ENCODE measurements at regions of chr22 and their contacts with region 1.

Region 1: DNA sequence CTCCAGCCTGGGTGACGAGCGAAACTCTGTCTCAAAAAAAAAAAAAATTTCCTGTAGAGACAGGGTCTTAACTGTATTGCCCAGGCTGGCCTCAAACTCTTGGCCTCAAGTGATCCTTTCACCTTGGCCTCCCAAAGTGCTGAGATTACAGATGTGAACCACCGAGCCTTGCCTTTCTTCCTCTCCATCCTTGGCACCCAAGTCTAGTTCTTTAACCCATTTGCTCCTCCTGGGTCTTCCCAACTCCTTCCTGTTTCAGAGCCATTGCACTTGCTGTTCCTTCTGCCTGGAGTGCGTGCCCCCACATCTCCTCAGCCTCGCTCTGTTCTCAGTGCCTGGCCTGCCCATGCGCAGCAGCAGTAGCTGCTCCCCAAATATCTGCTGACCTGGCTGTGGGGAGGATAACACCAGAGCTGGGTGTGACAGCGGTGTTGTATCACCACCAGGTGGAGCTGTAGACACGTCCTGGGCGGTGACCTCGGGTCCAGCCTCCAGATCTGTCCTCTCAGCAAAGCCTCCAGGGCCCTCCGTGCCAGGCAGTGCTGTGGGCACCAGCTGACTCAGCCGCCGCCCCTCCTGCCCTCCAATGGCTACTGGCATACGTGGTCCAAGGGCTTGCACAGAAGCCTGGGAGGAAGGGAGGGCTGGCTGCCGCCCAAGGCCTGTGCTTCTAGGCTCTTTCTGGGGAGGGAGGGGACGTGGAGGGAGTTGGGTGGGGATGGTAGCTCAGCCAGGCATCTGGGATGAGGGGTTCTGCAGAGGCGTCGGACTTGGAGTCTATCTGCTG is 22.0 kb downstream of the TEF start:
- DNase-seq: peak; percentile 86
- H3K4me3 ChIP-seq: no peak overlapping the region
- H3K27ac ChIP-seq: no peak overlapping the region
- H3K4me1 ChIP-seq: peaks cover 10% of the 10 kb centered on the region
- CTCF ChIP-seq: peak; percentile 98

Region 2: GRCh38 chr22:41360126-41360525 is 43.6 kb before region 1 on chr22:
- CTCF ChIA-PET with region 1: no interaction called
- POLR2A ChIA-PET with region 1: no interaction called
- intact Hi-C with region 1: no loop called
- DNase-seq: no peak
- H3K4me3 ChIP-seq: no peak overlapping the region
- H3K27ac ChIP-seq: no peak overlapping the region
- H3K4me1 ChIP-seq: no peaks in the 10 kb centered on the region
- CTCF ChIP-seq: no peak

Region 3: GRCh38 chr22:41381329-41382097 is 22.2 kb before region 1 on chr22 and contains the start of gene TEF:
- CTCF ChIA-PET with region 1: interaction called, 19 read pairs
- POLR2A ChIA-PET with region 1: no interaction called
- intact Hi-C with region 1: no loop called
- DNase-seq: peak; percentile 99
- H3K4me3 ChIP-seq: peak within 1 kb of the TSS; percentile 76
- H3K27ac ChIP-seq: peak within 1 kb of the TSS; percentile 59
- H3K4me1 ChIP-seq: peaks cover 24% of the 10 kb centered on the region
- CTCF ChIP-seq: no peak
- total RNA-seq, gene TEF: 4.3 and 6.8 TPM in 2 replicates

Region 4: GRCh38 chr22:41501209-41501608 is 97.5 kb after region 1 on chr22:
- CTCF ChIA-PET with region 1: no interaction called
- POLR2A ChIA-PET with region 1: no interaction called
- intact Hi-C with region 1: loop called (anchors 1 kb)
- DNase-seq: peak; percentile 51
- H3K4me3 ChIP-seq: no peak overlapping the region
- H3K27ac ChIP-seq: no peak overlapping the region
- H3K4me1 ChIP-seq: no peaks in the 10 kb centered on the region
- CTCF ChIP-seq: peak; percentile 70

Region 5: DNA sequence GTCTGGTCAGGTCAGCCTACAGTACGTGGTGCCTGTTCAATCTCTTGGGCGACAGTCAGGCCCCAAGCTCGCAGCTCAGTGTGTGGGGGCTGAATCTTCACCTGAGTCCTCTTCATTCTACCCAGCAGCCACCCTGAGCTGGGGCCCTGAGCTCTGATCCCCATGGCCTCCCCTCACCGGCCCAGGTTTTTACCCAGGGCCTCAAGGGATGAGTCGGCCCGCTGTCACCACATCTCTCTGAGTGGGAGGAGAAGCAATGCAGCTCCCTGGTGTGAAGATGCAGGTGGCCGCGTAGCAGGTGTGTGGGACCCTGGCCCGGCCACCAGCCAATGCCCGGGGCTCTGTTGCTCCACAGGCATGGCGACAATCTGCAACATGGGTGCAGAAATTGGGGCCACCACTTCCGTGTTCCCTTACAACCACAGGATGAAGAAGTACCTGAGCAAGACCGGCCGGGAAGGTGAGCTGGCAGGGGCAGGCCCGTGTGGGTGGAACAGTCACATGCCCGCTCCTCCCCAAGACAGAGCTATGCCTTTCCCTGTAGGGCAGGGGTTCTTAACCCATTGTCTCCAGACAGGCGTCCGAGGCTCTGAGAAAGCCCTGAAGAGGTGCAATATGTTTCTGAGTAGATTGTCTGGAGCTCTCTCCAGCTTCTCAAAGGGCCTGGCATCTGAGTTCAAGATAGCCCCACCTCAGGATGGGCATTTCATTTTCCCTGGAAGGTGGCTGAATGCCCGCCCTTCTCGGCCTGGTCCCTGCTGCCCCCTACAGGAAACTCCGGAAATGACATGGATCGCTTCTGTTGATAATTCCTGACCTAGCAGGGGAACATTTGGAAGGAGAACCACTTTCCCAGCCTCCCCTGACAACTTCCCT is 113.7 kb after region 1 on chr22:
- CTCF ChIA-PET with region 1: interaction called, 5 read pairs
- POLR2A ChIA-PET with region 1: no interaction called
- intact Hi-C with region 1: loop called (anchors 1 kb)
- DNase-seq: no peak
- H3K4me3 ChIP-seq: no peak overlapping the region
- H3K27ac ChIP-seq: no peak overlapping the region
- H3K4me1 ChIP-seq: no peaks in the 10 kb centered on the region
- CTCF ChIP-seq: peak; percentile 85

Region 6: GRCh38 chr22:41526837-41527799 is 123.4 kb after region 1 on chr22:
- CTCF ChIA-PET with region 1: interaction called, 7 read pairs
- POLR2A ChIA-PET with region 1: no interaction called
- intact Hi-C with region 1: loop called (anchors 1 kb)
- DNase-seq: peak; percentile 60
- H3K4me3 ChIP-seq: no peak overlapping the region
- H3K27ac ChIP-seq: no peak overlapping the region
- H3K4me1 ChIP-seq: no peaks in the 10 kb centered on the region
- CTCF ChIP-seq: peak; percentile 98

Region 7: GRCh38 chr22:41596776-41597634 is 193.3 kb after region 1 on chr22:
- CTCF ChIA-PET with region 1: no interaction called
- POLR2A ChIA-PET with region 1: no interaction called
- intact Hi-C with region 1: loop called (anchors 5 kb)
- DNase-seq: peak; percentile 45
- H3K4me3 ChIP-seq: no peak overlapping the region
- H3K27ac ChIP-seq: no peak overlapping the region
- H3K4me1 ChIP-seq: no peaks in the 10 kb centered on the region
- CTCF ChIP-seq: peak; percentile 80

Region 8: DNA sequence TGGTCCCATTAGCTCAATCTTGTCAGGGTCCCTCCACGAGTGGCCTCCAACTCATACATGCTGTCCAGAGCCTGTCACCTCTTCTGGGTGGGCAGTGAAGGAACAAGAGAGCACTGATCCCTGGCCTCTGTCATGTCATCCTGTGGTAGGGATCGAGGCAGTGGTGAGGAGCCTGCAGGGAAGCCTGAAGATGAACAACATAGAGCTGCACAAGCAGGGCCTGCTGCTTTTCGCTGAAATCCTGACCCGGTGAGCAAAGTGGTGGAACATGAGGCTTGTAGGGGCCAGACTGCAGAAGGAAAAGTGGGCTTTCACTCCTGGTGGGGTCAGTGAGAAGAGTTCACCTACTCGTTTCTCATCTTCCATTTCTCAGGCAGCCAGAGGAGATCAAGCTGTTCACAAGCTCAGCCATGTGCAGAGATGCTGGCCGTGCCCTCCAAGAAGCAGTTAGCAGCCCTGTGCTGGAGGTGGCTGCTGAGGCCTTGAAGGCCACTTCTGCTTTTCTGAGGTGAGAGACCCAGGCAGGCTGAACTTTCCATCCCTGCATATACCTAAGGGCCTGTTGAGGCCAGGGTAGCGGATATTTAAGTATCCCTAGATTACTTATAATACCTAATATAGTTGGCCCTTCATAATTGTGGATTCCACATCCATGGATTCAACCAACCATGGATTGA is 328.5 kb after region 1 on chr22:
- CTCF ChIA-PET with region 1: no interaction called
- POLR2A ChIA-PET with region 1: no interaction called
- intact Hi-C with region 1: no loop called
- DNase-seq: peak; percentile 23
- H3K4me3 ChIP-seq: no peak overlapping the region
- H3K27ac ChIP-seq: no peak overlapping the region
- H3K4me1 ChIP-seq: peaks cover 3% of the 10 kb centered on the region
- CTCF ChIP-seq: no peak